Activated T-helper 1 cell treated with anti-CD3 and anti-CD28 coated beads, Interleukin-12 subunit alpha, Interleukin-12 subunit beta, Interleukin-2, Interleukin-4 antibody, amounts not matched to agents 30 ng/mL and 10 ng/mL and 1 ng/mL, durations not matched to agents 14 hours and 24 hours and 36 hours (primary cell): ENCODE measurements at regions of chr12 and their contacts with region 1.

Region 1: GRCh38 chr12:64669270-64669842 is 59.1 kb downstream of the RASSF3 start:
- DNase-seq: peak; percentile 53
- H3K4me3 Mint-ChIP-seq: peak overlapping the region; percentile 85
- H3K27ac Mint-ChIP-seq: peak overlapping the region; percentile 94
- H3K4me1 Mint-ChIP-seq: peaks cover 87% of the 10 kb centered on the region
- H3K27me3 Mint-ChIP-seq: no peaks in the 10 kb centered on the region

Region 2: DNA sequence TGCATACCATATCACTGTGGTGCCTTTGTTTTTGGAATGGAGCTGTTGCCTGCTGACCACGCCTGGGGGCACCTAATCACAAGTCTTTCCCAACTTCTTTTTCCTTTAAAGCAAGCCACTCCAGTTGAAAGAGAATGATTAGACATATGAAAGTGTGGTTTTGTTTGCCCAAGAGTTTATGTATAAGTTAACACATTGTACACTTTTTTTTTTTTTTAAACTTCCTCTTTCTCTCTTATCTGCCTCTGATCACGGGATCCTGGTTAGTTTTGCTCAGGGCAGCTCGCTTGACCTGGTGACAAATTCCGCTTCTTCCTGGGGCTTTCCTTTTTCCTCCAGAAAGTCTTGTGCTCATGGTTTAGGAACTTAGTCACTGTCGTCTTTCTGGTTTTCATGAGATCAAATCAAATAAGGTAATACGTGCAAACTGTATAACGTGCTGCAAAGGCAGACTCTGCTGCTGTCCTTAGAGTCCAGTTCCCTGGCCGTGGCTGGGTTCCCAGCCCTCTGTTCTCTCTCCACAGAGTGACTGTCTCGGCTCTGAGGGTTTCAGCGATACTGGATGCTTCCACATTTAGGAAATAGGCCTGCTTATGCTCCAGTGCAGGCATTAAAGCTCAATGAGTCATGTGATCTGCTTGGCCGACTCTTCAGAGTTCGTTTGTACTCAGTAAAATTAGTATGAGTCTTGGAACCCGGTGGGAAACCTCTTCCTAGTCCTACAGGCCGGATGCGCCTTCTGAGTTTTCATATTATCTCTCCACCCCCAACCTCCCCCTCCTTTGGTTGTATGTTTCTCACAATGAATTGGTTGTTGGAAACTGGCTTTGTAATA is 43.9 kb before region 1 on chr12:
- intact Hi-C with region 1: loop called (anchors 2 kb)
- DNase-seq: no peak
- H3K4me3 Mint-ChIP-seq: peak overlapping the region; percentile 77
- H3K27ac Mint-ChIP-seq: peak overlapping the region; percentile 83
- H3K4me1 Mint-ChIP-seq: peaks cover 33% of the 10 kb centered on the region
- H3K27me3 Mint-ChIP-seq: no peaks in the 10 kb centered on the region